Head of caudate nucleus (tissue), 42 donors: ENCODE measurements at regions of chr5 and their contacts with region 1.

Region 1: GRCh38 chr5:150217873-150218692 is 28.2 kb downstream of the SLC6A7 start:
- DNase-seq: peak; percentile 67 to 93 (median 87)

Region 2: GRCh38 chr5:150129813-150130492 is 88.1 kb before region 1 on chr5:
- intact Hi-C with region 1: loop called (anchors 5 kb)
- DNase-seq: peak in 41 of 42 donors; percentile 49 to 88 (median 71)

Region 3: GRCh38 chr5:150167908-150168307 is 50.2 kb before region 1 on chr5:
- intact Hi-C with region 1: loop called (anchors 5 kb)
- DNase-seq: no peak

Region 4: GRCh38 chr5:150263801-150264621 is 45.9 kb after region 1 on chr5:
- intact Hi-C with region 1: no loop called
- DNase-seq: peak in 32 of 42 donors; percentile 22 to 83 (median 52)